WTC11 (cell line): ENCODE measurements at regions of chr7 and their contacts with region 1.

Region 1: DNA sequence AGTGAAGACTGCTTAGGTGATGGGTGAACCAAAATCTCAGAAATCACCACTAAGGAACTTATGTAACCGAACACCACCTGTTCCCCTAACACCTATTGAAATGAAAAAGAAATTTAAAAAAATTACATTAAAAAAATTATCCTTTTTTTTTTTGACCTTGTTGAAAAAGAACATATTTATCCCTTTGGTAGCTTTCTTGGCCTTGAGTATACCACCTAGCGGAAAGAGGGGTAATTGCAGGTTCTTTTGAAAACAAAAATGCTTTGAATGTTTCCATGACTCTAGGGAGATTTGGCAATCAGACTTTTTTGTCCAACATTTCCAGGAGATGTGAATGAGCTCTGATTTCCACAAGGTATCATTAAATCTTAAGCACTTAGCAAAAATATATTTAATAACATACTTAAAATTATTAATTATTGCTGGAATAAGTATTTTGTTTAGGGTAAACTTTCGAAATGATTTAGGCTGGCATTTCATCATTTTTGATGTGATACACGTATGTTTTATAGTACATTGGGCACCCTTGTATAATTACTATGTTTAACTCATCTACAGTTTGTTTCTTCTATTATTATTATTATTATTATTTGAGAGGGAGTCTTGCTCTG is 47.0 kb upstream of the ELMO1 start:
- DNase-seq: no peak
- ATAC-seq: no peak
- H3K4me3 Mint-ChIP-seq: peak overlapping the region; percentile 66; the same call in 1 of the 2 replicates
- H3K27ac Mint-ChIP-seq: no peak overlapping the region
- H3K4me1 Mint-ChIP-seq: peaks cover 40% of the 10 kb centered on the region
- H3K27me3 Mint-ChIP-seq: no peaks in the 10 kb centered on the region
- CTCF ChIP-seq: peak; percentile 62

Region 2: GRCh38 chr7:37247861-37248260 is 247.8 kb before region 1 on chr7:
- CTCF ChIA-PET with region 1: interaction called, 12 read pairs
- POLR2A ChIA-PET with region 1: no interaction called
- DNase-seq: peak; percentile 26
- ATAC-seq: peak; percentile 83
- H3K4me3 Mint-ChIP-seq: peak overlapping the region; percentile 41
- H3K27ac Mint-ChIP-seq: peak overlapping the region; percentile 99
- H3K4me1 Mint-ChIP-seq: peaks cover 64% of the 10 kb centered on the region
- H3K27me3 Mint-ChIP-seq: no peaks in the 10 kb centered on the region
- CTCF ChIP-seq: no peak

Region 3: DNA sequence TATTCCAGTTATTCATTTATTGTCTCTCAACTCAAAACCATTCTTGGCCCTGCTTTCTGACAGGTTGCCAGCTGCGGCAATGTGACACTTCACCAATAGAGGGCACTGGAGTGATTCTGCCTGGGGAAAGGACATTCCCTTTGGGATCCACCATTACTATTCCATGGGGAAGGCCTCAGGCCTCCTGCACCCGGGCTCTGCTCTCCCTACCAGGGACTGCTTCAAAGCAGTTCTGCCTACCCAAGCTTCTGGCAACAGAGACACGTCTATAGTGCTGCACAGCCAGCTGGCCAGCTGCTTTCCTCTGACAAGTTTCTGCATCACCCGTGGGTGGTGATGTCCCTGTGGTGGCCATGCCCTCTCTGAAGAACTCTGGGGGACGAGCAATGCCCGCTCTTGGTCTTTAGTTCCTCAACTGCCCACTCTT is 210.9 kb before region 1 on chr7:
- CTCF ChIA-PET with region 1: interaction called, 17 read pairs
- POLR2A ChIA-PET with region 1: interaction called, 3 read pairs
- DNase-seq: peak; percentile 80
- ATAC-seq: peak; percentile 89
- H3K4me3 Mint-ChIP-seq: no peak overlapping the region
- H3K27ac Mint-ChIP-seq: no peak overlapping the region
- H3K4me1 Mint-ChIP-seq: peaks cover 39% of the 10 kb centered on the region
- H3K27me3 Mint-ChIP-seq: no peaks in the 10 kb centered on the region
- CTCF ChIP-seq: peak; percentile 80

Region 4: GRCh38 chr7:37448636-37449361 is 46.9 kb before region 1 on chr7 and contains the start of gene ELMO1:
- CTCF ChIA-PET with region 1: interaction called, 36 read pairs
- POLR2A ChIA-PET with region 1: no interaction called
- DNase-seq: peak; percentile 81
- ATAC-seq: peak; percentile 87
- H3K4me3 Mint-ChIP-seq: peak within 1 kb of the TSS; percentile 82
- H3K27ac Mint-ChIP-seq: peak within 1 kb of the TSS; percentile 57
- H3K4me1 Mint-ChIP-seq: peaks cover 44% of the 10 kb centered on the region
- H3K27me3 Mint-ChIP-seq: peaks cover 10% of the 10 kb centered on the region
- CTCF ChIP-seq: 0 out of 2 replicates have a peak, but pooled peaks have one; percentile 32
- total RNA-seq, gene ELMO1: 17.8 to 19.4 TPM (median 17.9 TPM) in 3 replicates

Region 5: GRCh38 chr7:37480041-37481031 is 15.3 kb before region 1 on chr7:
- CTCF ChIA-PET with region 1: interaction called, 18 read pairs
- POLR2A ChIA-PET with region 1: no interaction called
- DNase-seq: no peak
- ATAC-seq: no peak
- H3K4me3 Mint-ChIP-seq: no peak overlapping the region
- H3K27ac Mint-ChIP-seq: no peak overlapping the region; the same call in 1 of the 2 replicates
- H3K4me1 Mint-ChIP-seq: peaks cover 14% of the 10 kb centered on the region
- H3K27me3 Mint-ChIP-seq: 0 out of 2 replicates have a peak, but pooled peaks cover under 1% of the 10 kb centered on the region
- CTCF ChIP-seq: no peak

Region 6: DNA sequence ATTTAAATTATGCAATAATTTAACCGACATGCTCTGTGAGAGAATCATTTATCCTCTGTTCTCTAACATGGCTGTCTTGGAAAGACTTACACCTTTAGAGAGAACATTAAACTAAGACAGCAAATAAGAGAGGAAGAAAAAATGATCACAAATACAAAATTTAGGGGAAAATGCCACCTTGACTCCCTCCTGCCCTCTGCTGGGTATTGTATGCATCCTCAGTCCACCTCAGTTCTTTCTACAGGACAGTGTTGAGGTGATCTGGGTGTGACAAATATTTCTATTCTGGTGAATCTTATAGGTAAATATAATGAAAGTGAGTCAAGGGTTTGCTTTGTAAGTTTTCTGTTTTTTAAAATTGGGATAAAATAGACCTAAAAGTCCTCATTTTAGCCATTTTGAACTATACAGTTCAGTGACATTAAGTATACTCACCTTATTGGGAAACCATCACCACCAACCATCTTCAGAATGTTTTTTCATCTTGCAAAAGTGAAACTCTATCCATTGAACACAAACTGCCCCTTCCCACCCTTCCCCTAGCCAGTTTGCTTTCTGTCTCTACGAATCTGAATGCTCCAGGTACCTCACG is 14.5 kb after region 1 on chr7:
- CTCF ChIA-PET with region 1: interaction called, 44 read pairs
- POLR2A ChIA-PET with region 1: no interaction called
- DNase-seq: no peak
- ATAC-seq: peak; percentile 61; the same call in 1 of the 2 replicates
- H3K4me3 Mint-ChIP-seq: no peak overlapping the region
- H3K27ac Mint-ChIP-seq: no peak overlapping the region
- H3K4me1 Mint-ChIP-seq: peaks cover 30% of the 10 kb centered on the region
- H3K27me3 Mint-ChIP-seq: no peaks in the 10 kb centered on the region
- CTCF ChIP-seq: peak; percentile 48; the same call in 1 of the 2 replicates